ENCODE measurements at regions of chr1 and their contacts with region 1.

Region 1: DNA sequence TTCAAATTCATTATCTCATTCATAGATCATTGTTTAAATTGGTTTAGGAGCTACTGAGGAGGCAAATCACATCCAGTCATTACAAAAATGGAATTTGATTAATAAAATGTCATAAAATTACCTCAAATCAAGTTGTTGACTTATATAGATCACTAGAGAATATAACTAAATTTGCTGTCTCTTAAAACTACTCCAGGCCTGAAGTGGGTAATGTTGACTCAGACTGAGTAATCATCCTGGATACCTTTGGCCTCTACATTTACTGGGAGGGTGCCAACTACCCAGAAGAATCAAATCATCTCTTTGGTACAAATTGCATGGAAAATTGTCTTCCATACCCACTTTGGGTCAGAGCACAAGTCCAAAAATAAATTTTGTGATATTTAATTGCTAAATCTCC is 191.2 kb upstream of the GREM2 start:
- DNase-seq: peak; percentile 77
- H3K4me3 ChIP-seq: no peak overlapping the region
- H3K27ac ChIP-seq: peak overlapping the region; percentile 63
- H3K4me1 ChIP-seq: peaks cover 24% of the 10 kb centered on the region
- H3K27me3 ChIP-seq: no peaks in the 10 kb centered on the region
- CTCF ChIP-seq: no peak
- POLR2A ChIP-seq: no peak

Region 2: DNA sequence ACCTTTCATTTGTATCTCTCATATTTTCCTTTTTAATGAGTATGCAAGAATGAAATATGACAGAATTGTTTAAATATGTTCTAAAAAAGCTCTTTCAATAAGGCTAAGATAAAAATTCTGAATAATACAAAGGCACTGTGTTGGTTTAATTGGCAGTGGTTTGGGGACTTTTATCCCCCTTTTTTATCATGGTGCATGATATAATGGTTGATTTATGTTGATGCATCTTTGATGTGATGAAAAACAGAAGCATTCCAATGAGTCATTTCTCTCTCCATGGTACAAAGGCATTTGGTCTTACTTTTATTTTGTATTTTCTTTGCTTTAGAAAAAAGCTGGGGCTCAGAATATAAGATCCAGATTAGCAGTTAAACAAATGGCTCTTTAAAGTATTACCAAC is 64.0 kb before region 1 on chr1:
- CTCF ChIA-PET with region 1: no interaction called
- POLR2A ChIA-PET with region 1: no interaction called
- dilution Hi-C with region 1: no loop called
- intact Hi-C with region 1: no loop called
- DNase-seq: no peak
- H3K4me3 ChIP-seq: no peak overlapping the region
- H3K27ac ChIP-seq: no peak overlapping the region
- H3K4me1 ChIP-seq: no peaks in the 10 kb centered on the region
- H3K27me3 ChIP-seq: no peaks in the 10 kb centered on the region
- CTCF ChIP-seq: no peak
- POLR2A ChIP-seq: no peak

Region 3: GRCh38 chr1:240765732-240766363 is 37.3 kb before region 1 on chr1:
- CTCF ChIA-PET with region 1: no interaction called
- POLR2A ChIA-PET with region 1: interaction called, 3 read pairs
- dilution Hi-C with region 1: no loop called
- intact Hi-C with region 1: loop called (anchors 1 kb)
- DNase-seq: peak; percentile 75
- H3K4me3 ChIP-seq: no peak overlapping the region
- H3K27ac ChIP-seq: peak overlapping the region; percentile 89
- H3K4me1 ChIP-seq: peaks cover 20% of the 10 kb centered on the region
- H3K27me3 ChIP-seq: no peaks in the 10 kb centered on the region
- CTCF ChIP-seq: no peak
- POLR2A ChIP-seq: no peak

Region 4: DNA sequence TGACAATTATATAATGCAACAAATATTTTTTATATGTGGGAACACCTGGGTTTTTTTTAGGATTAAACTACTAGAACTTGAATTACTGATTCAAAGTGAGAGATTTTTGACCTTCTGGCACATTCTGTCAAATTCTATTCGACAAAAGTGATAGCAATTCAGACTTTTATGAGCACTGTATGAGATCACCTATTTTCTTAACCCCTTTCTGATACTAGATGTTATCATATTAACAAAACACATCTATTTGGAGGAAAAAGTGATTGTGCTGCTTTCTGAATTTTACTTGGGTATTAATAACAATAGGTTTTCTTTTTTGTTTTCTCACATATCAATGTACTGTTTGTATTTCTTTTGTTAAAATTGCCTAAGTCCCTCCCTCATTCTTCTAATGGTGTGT is 16.3 kb before region 1 on chr1:
- CTCF ChIA-PET with region 1: no interaction called
- POLR2A ChIA-PET with region 1: interaction called, 3 read pairs
- dilution Hi-C with region 1: no loop called
- intact Hi-C with region 1: loop called (anchors 2 kb)
- DNase-seq: peak; percentile 60
- H3K4me3 ChIP-seq: no peak overlapping the region
- H3K27ac ChIP-seq: peak overlapping the region; percentile 53
- H3K4me1 ChIP-seq: peaks cover 18% of the 10 kb centered on the region
- H3K27me3 ChIP-seq: no peaks in the 10 kb centered on the region
- CTCF ChIP-seq: no peak
- POLR2A ChIP-seq: no peak

Region 5: GRCh38 chr1:240917976-240918375 is 114.8 kb after region 1 on chr1:
- CTCF ChIA-PET with region 1: no interaction called
- POLR2A ChIA-PET with region 1: no interaction called
- dilution Hi-C with region 1: no loop called
- intact Hi-C with region 1: no loop called
- DNase-seq: no peak
- H3K4me3 ChIP-seq: no peak overlapping the region
- H3K27ac ChIP-seq: no peak overlapping the region
- H3K4me1 ChIP-seq: no peaks in the 10 kb centered on the region
- H3K27me3 ChIP-seq: no peaks in the 10 kb centered on the region
- CTCF ChIP-seq: no peak
- POLR2A ChIP-seq: no peak

Measured in endothelial cell of umbilical vein (primary cell).